ENCODE measurements at regions of chr12 and their contacts with region 1.

Region 1: GRCh38 chr12:92987362-92987761 is 58.3 kb upstream of the EEA1 start:
- DNase-seq: peak; percentile 39
- H3K4me3 Mint-ChIP-seq: no peak overlapping the region
- H3K27ac Mint-ChIP-seq: peak overlapping the region; percentile 27
- H3K4me1 Mint-ChIP-seq: peaks cover 30% of the 10 kb centered on the region
- H3K27me3 Mint-ChIP-seq: no peaks in the 10 kb centered on the region
- CTCF ChIP-seq: peak; percentile 23

Region 2: DNA sequence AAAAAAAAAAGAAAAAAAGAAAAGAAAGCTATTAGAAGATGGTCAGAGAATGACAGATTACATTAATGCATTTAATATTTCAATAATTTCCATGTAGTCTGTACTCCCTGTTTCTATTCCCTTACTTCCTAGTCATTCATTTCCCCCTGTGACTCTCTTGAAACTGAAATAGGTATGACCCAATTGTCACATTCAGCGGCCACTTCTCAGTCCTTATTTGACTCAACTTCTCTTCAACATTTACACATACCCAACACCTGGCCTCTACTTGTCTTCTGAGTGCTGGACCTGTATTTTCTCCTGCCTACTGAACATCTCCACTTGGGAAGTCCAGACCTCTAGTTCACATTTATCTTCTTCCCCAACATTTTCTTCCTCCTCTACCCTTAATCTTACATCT is 65.5 kb before region 1 on chr12:
- CTCF ChIA-PET with region 1: no interaction called
- intact Hi-C with region 1: no loop called
- DNase-seq: no peak
- H3K4me3 Mint-ChIP-seq: no peak overlapping the region
- H3K27ac Mint-ChIP-seq: no peak overlapping the region
- H3K4me1 Mint-ChIP-seq: peaks cover 7% of the 10 kb centered on the region
- H3K27me3 Mint-ChIP-seq: no peaks in the 10 kb centered on the region
- CTCF ChIP-seq: no peak

Region 3: GRCh38 chr12:93019975-93020630 is 32.7 kb after region 1 on chr12:
- CTCF ChIA-PET with region 1: interaction called, 9 read pairs
- intact Hi-C with region 1: loop called (anchors 2 kb)
- DNase-seq: peak; percentile 64
- H3K4me3 Mint-ChIP-seq: no peak overlapping the region
- H3K27ac Mint-ChIP-seq: peak overlapping the region; percentile 86
- H3K4me1 Mint-ChIP-seq: peaks cover 66% of the 10 kb centered on the region
- H3K27me3 Mint-ChIP-seq: no peaks in the 10 kb centered on the region
- CTCF ChIP-seq: no peak

Region 4: GRCh38 chr12:93137656-93138612 is 150.6 kb after region 1 on chr12:
- CTCF ChIA-PET with region 1: no interaction called
- intact Hi-C with region 1: loop called (anchors 5 kb)
- DNase-seq: peak; percentile 25
- H3K4me3 Mint-ChIP-seq: no peak overlapping the region
- H3K27ac Mint-ChIP-seq: no peak overlapping the region
- H3K4me1 Mint-ChIP-seq: peaks cover 47% of the 10 kb centered on the region
- H3K27me3 Mint-ChIP-seq: no peaks in the 10 kb centered on the region
- CTCF ChIP-seq: no peak

Region 5: DNA sequence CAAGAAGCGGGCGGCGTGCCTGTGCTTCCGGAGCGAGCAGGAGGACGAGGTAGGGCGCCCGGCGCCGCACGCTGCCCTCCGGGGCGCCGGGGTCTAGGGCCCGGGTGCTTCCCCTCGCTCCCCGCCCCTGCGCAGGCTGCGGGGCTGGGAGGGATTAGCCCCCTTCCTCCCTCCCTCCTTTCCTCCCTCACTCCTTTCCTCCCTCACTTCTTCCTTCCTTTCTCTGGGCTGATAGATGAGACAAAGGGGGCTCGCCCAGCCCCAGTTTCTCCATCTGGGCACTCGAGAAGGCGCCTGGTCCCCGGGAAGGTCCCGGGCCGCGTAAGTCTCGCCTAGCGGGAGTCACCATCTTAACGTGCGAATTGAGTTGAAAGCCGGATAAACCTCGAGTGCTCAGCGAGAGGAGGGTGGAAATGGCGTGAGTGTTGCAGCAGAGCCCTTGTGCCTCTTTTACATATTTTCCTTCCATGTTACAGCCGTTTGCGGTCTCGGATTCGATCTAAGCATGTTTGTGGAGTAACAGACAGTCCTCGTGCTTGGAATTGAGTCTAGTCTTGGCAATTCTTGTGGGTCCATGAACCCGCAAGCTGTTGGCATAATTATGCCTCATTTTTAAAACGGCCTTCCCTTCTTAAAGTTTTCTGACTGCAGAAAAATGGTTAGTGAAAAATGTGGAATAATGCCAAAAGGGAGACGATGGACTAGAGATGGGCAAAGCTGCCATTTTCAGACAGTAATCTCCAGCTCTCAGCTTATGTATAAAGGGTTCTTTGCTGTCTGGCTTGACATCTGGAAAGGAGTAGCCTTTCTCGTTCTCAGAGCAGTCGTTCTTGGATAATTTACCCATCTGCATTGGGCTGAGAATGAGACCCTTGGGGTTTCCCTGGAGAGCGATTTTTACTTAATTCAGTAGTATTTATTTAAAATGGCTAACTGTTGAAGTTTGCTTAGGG is 391.3 kb after region 1 on chr12:
- CTCF ChIA-PET with region 1: interaction called, 31 read pairs
- intact Hi-C with region 1: loop called (anchors 1 kb)
- DNase-seq: peak; percentile 51
- H3K4me3 Mint-ChIP-seq: peak overlapping the region; percentile 99
- H3K27ac Mint-ChIP-seq: peak overlapping the region; percentile 96
- H3K4me1 Mint-ChIP-seq: peaks cover 58% of the 10 kb centered on the region
- H3K27me3 Mint-ChIP-seq: no peaks in the 10 kb centered on the region
- CTCF ChIP-seq: no peak

Region 6: DNA sequence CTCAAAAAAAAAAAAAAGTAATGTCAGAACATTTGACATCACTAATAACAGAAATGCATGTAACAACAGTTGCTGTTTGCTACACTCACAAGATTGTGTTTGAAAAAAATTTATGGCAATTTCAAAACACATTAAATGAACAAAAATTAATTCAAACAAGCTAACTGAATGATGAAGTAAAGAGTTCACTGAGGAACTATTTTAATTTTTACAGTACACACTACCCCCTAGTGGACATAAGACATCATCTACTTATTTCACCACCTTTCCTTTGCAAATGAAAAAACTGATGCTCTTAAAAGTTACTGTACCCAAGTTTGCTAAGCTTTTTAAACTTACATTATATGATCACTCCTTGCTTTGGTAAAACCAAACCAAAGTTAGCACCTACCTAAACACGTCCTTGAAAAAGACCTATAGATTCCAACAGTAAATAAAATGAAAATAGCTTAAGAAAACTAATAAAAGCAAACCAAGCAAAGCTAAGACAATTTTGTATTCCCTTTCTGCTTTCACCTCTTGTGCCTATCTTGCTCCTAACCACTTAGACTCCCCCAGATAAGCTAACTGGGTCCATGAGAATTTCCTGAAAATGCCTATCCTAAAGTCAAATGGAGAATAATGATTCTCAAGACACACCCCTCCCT is 432.1 kb after region 1 on chr12:
- CTCF ChIA-PET with region 1: interaction called, 10 read pairs
- intact Hi-C with region 1: loop called (anchors 2 kb)
- DNase-seq: no peak
- H3K4me3 Mint-ChIP-seq: no peak overlapping the region
- H3K27ac Mint-ChIP-seq: peak overlapping the region; percentile 27
- H3K4me1 Mint-ChIP-seq: peaks cover 44% of the 10 kb centered on the region
- H3K27me3 Mint-ChIP-seq: no peaks in the 10 kb centered on the region
- CTCF ChIP-seq: peak; percentile 35

Measured in Calu3 (cell line).